ENCODE measurements at regions of chr3 and their contacts with region 1.

Region 1: DNA sequence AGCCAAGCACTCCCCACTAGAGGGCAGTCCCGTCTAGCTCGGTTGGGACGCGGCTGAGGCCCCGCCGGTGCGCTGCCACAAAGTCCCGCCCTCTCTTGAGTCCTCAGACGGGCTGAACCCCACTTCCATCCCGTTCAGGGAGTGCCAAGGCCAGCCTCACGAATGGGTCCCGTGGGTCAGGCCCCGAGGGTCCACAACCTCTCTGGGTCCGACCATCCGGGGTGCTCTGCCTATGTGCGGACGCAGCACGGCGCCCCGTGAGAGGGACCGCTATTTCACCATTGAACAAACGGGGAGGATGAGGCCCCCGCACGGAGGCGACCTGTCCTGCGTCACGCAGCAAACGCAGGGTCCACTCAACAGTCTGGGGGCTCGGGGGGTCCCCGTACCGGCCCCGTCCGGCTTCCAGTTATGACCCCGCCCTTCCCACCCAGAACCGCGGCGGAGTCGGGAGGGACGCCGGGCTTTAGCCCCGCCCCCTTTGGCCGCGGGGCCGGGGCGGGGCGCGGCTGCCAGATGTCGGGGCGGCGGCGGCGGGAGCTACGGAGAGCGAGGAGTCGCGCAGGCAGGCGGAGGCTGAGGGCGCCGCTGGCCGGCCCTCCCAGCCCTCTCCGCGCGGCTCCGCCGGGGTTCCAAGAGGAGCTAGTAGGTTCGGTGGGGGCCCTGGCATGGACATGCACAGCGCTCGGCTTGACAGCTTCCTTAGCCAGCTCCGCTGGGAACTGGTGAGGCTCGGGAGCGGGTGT is at the start of gene INKA1:
- DNase-seq: peak; percentile 94
- ATAC-seq: peak; percentile 87
- H3K4me3 Mint-ChIP-seq: peak within 1 kb of the TSS; percentile 79
- H3K27ac Mint-ChIP-seq: peak within 1 kb of the TSS; percentile 55
- H3K4me1 Mint-ChIP-seq: peaks cover 40% of the 10 kb centered on the region
- H3K27me3 Mint-ChIP-seq: peaks cover 10% of the 10 kb centered on the region
- total RNA-seq, gene INKA1: 0.50 to 0.70 TPM

Region 2: DNA sequence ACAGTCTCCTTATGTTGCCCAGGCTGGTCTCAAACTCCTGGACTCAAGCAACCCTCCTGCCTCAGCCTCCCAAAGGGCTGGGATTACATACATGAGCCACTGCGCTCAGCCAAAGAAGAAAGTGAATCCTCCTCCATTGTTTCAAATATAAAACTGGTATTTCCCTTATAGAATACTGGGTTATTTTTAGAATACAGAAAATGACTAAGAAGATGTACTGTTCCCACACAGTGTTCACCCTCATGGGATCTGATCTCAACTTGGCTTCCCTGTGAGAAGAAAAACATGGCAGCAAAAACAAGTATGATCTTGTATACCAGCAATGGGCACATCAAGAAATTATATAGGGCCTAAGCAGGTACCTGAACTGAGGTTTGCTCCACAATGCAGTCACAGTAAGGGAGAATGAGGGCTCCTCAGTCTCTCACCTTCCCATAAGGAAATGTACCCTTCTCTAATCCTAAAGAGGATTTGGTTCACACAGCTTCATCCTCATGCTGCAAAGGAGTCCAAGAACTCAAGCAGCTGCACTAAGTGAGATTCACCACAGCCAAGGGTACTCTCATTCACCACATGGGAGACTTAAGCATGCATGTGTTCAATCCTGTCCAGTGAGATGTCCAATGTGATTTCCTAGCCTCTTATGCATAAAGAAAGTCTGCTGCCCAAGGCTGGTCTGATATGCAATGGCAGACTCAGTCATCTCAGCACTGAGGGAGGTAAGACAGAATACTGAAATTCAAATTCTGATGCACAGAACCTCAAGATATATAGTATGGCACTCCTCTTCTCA is 488.8 kb before region 1 on chr3:
- CTCF ChIA-PET with region 1: no interaction called
- POLR2A ChIA-PET with region 1: no interaction called
- intact Hi-C with region 1: no loop called
- DNase-seq: no peak
- ATAC-seq: peak; percentile 55
- H3K4me3 Mint-ChIP-seq: no peak overlapping the region
- H3K27ac Mint-ChIP-seq: peak overlapping the region; percentile 55
- H3K4me1 Mint-ChIP-seq: peaks cover 9% of the 10 kb centered on the region
- H3K27me3 Mint-ChIP-seq: no peaks in the 10 kb centered on the region

Region 3: GRCh38 chr3:49370585-49371290 is 432.2 kb before region 1 on chr3:
- CTCF ChIA-PET with region 1: no interaction called
- POLR2A ChIA-PET with region 1: no interaction called
- intact Hi-C with region 1: no loop called
- DNase-seq: no peak
- ATAC-seq: peak; percentile 60
- H3K4me3 Mint-ChIP-seq: no peak overlapping the region
- H3K27ac Mint-ChIP-seq: peak overlapping the region; percentile 76
- H3K4me1 Mint-ChIP-seq: peaks cover 21% of the 10 kb centered on the region
- H3K27me3 Mint-ChIP-seq: no peaks in the 10 kb centered on the region

Region 4: GRCh38 chr3:49461443-49462171 is 341.3 kb before region 1 on chr3:
- CTCF ChIA-PET with region 1: no interaction called
- POLR2A ChIA-PET with region 1: no interaction called
- intact Hi-C with region 1: no loop called
- DNase-seq: no peak
- ATAC-seq: no peak
- H3K4me3 Mint-ChIP-seq: no peak overlapping the region
- H3K27ac Mint-ChIP-seq: no peak overlapping the region
- H3K4me1 Mint-ChIP-seq: no peaks in the 10 kb centered on the region
- H3K27me3 Mint-ChIP-seq: no peaks in the 10 kb centered on the region

Region 5: DNA sequence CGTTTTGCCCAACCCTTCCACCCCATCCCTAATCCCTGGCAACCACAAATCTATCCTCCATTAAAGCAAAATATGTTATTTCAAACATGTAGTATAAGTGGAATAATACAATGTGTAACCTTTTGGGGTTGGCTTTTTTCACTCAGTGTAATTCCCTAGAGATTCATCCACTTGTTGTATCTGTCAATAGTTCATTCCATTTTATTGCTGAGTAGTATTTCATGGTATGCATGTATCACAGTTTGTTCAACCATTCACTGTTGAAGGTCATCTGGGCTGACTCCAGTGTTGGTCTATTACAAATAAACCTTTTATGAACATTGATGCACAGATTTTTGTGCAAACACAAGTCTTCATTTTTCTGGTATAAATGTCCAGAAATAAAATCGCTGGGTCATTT is 209.9 kb before region 1 on chr3:
- CTCF ChIA-PET with region 1: no interaction called
- POLR2A ChIA-PET with region 1: no interaction called
- intact Hi-C with region 1: no loop called
- DNase-seq: no peak
- ATAC-seq: no peak
- H3K4me3 Mint-ChIP-seq: no peak overlapping the region
- H3K27ac Mint-ChIP-seq: no peak overlapping the region
- H3K4me1 Mint-ChIP-seq: no peaks in the 10 kb centered on the region
- H3K27me3 Mint-ChIP-seq: peaks cover 3% of the 10 kb centered on the region

Region 6: DNA sequence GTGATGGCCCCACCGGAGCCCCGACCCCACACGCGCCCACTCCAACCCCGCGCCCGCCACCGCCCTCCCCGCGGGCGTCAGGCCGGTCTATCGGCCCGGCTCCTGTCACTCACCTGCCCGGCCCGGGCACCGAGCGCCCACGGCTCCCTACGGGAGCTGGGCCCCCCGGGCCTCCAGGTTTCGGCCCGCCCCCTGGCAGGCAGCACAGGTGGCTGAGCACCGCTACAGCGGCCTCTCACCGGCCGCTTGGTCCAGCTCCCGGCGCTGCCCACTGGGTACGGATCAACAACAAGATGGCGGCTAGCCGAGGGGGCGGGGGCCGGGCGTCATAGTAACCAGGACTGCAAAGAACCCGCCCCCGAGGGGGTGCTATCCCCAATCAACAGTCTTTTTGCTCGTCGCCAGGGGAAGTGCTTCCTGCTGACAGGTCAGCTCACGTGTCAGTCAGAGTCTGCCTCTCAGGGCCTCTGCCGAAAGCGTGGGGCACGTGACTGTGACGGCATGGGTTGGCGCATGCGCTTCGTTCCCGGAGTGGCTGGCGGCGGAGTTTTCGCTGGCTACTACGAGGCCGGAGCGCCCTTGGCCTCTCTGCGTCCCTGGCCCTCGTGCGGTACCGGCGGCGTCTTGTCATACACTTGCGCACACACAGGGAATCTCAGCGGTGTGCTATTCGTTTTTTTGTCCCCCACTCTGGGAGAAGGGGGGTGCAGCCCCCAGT is 16.5 kb before region 1 on chr3 and contains the start of gene IP6K1:
- CTCF ChIA-PET with region 1: interaction called, 16 read pairs
- POLR2A ChIA-PET with region 1: no interaction called
- intact Hi-C with region 1: loop called (anchors 1 kb)
- DNase-seq: peak; percentile 100
- ATAC-seq: peak; percentile 100
- H3K4me3 Mint-ChIP-seq: peak within 1 kb of the TSS; percentile 90
- H3K27ac Mint-ChIP-seq: peak within 1 kb of the TSS; percentile 96
- H3K4me1 Mint-ChIP-seq: peaks cover 37% of the 10 kb centered on the region
- H3K27me3 Mint-ChIP-seq: no peaks in the 10 kb centered on the region
- total RNA-seq, gene IP6K1: 29.1 to 31.0 TPM

Region 7: DNA sequence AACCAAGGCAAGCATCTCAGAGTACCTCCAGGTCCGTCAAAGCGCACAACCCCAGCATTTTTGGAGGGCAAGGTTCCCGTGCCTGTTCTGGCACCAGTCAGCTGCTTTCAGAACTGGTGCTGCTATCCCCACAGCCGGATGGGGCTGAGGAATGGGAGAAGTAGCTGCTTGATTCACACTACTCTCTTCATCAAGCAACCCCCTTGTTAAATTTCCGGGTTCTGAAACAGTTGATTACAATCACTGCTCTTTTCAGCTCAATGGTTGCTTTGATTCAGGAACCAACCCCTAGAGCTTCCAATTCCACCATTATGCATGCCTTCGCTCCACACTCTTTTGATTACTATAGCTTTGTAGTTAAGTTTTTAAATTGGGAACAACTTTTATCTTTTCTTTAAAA is 23.1 kb after region 1 on chr3:
- CTCF ChIA-PET with region 1: interaction called, 16 read pairs
- POLR2A ChIA-PET with region 1: no interaction called
- intact Hi-C with region 1: no loop called
- DNase-seq: no peak
- ATAC-seq: no peak
- H3K4me3 Mint-ChIP-seq: no peak overlapping the region
- H3K27ac Mint-ChIP-seq: no peak overlapping the region
- H3K4me1 Mint-ChIP-seq: no peaks in the 10 kb centered on the region
- H3K27me3 Mint-ChIP-seq: no peaks in the 10 kb centered on the region

Region 8: DNA sequence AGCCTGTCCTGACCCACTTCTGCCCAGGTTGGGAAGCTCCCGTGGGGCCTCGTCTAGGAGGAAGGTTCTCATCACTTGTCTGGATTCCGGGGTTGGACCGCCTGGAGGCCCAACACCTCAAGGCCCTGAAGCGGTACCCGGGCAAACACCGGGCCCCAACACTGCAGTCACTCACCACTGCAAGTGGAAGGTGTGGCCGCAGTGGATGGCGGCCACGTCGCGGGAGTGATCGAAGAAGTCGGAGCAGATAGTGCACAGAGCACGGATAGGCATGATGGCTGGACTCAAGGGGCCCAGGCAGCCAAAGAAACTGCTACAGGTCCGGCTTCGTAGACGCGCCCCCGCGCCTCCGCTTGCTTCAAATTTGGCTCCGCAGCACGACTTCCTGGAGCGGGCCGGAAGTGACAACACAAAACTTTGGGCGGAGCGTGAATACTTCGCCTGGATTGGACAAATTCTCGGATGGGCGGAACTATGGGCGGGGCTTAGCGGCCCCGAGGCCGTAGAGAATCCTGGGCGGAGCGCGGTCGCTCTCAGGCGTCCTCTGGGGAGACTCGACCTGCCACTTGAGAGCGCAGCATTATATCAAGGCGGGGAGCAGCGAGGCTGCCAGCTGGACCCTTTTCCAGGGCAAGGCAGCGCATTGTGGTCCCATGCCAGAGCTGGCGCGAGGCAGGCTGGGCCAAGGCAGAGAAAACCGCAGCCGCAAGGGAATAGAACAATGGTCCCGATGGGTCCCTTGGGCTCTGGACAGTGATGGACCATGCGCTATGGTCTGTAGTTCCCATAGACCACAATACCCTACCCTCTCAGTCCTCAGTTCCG is 53.5 kb after region 1 on chr3 and contains the start of gene TRAIP:
- CTCF ChIA-PET with region 1: interaction called, 4 read pairs
- POLR2A ChIA-PET with region 1: no interaction called
- intact Hi-C with region 1: loop called in 1 of 2 experiments (anchors 1 kb)
- DNase-seq: peak; percentile 97
- ATAC-seq: peak; percentile 99
- H3K4me3 Mint-ChIP-seq: peak within 1 kb of the TSS; percentile 97
- H3K27ac Mint-ChIP-seq: peak within 1 kb of the TSS; percentile 81
- H3K4me1 Mint-ChIP-seq: peaks cover 10% of the 10 kb centered on the region
- H3K27me3 Mint-ChIP-seq: no peaks in the 10 kb centered on the region
- total RNA-seq, gene TRAIP: 25.1 to 28.1 TPM

Region 9: GRCh38 chr3:49939858-49940666 is 137.2 kb after region 1 on chr3 and contains the start of gene RBM6:
- CTCF ChIA-PET with region 1: no interaction called
- POLR2A ChIA-PET with region 1: no interaction called
- intact Hi-C with region 1: loop called in 1 of 2 experiments (anchors 1 kb)
- DNase-seq: peak; percentile 98
- ATAC-seq: peak; percentile 99
- H3K4me3 Mint-ChIP-seq: peak within 1 kb of the TSS; percentile 98
- H3K27ac Mint-ChIP-seq: peak within 1 kb of the TSS; percentile 91
- H3K4me1 Mint-ChIP-seq: peaks cover 20% of the 10 kb centered on the region
- H3K27me3 Mint-ChIP-seq: no peaks in the 10 kb centered on the region
- total RNA-seq, gene RBM6: 69.3 to 75.1 TPM

Region 10: GRCh38 chr3:50192689-50193141 is 389.8 kb after region 1 on chr3:
- CTCF ChIA-PET with region 1: no interaction called
- POLR2A ChIA-PET with region 1: no interaction called
- intact Hi-C with region 1: loop called in 1 of 2 experiments (anchors 2 kb)
- DNase-seq: peak; percentile 90
- ATAC-seq: peak; percentile 57
- H3K4me3 Mint-ChIP-seq: no peak overlapping the region
- H3K27ac Mint-ChIP-seq: no peak overlapping the region
- H3K4me1 Mint-ChIP-seq: peaks cover 13% of the 10 kb centered on the region
- H3K27me3 Mint-ChIP-seq: peaks cover 12% of the 10 kb centered on the region